CD4-positive, alpha-beta memory T cell (primary cell): ENCODE measurements at regions of chr1 and their contacts with region 1.

Region 1: DNA sequence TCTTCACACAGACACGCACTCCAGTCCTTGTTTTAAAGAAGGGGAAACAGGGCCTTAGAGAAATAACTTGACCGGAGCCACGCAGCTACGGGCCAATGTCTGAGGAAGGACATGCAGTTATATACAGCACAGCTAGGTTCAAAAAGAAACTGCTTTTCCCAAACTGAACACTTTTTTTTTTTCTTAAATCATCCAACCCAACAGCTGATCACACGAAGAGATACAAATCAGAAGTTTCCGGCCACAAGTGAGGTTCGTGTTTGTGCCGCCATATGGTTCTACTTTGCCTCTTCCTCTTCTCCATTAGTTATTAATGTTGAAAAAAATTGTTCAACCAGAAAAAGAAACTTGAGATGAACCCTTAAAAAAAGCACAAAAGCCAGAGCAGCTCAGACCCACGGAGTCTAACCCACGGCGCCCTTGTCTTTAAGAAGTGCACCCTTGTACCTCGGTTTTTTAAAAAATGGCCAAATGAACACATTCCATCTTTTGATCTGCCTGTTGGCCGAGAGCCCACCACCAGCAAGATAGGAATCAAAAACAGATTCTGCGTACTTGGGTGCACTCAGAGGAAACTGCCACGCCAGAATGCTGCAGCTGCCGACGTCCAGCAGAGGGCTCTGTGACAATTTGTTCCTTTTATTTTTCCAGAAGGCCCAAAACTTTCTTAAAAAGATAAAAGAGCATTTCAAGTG is 78.9 kb downstream of the SLC66A1 start:
- DNase-seq: peak; percentile 83 to 88 (median 86)
- H3K4me3 ChIP-seq: peak overlapping the region; percentile 34 to 46
- H3K4me3 Mint-ChIP-seq: peak overlapping the region; percentile 84 to 94 (median 87)
- H3K27ac ChIP-seq: peak overlapping the region; percentile 64
- H3K27ac Mint-ChIP-seq: peak overlapping the region; percentile 92 to 99 (median 96)
- H3K4me1 ChIP-seq: peaks cover 89% of the 10 kb centered on the region
- H3K4me1 Mint-ChIP-seq: peaks cover 56 to 95% (median 78%) of the 10 kb centered on the region in 4 donors
- H3K27me3 ChIP-seq: no peaks in the 10 kb centered on the region
- H3K27me3 Mint-ChIP-seq: no peaks in the 10 kb centered on the region

Region 2: GRCh38 chr1:18783705-18784481 is 607.2 kb before region 1 on chr1:
- CTCF ChIA-PET with region 1: no interaction called
- POLR2A ChIA-PET with region 1: no interaction called
- intact Hi-C with region 1: no loop called
- DNase-seq: no peak
- H3K4me3 ChIP-seq: no peak overlapping the region
- H3K4me3 Mint-ChIP-seq: no peak overlapping the region
- H3K27ac ChIP-seq: no peak overlapping the region
- H3K27ac Mint-ChIP-seq: no peak overlapping the region
- H3K4me1 ChIP-seq: no peaks in the 10 kb centered on the region
- H3K4me1 Mint-ChIP-seq: no peaks in the 10 kb centered on the region
- H3K27me3 ChIP-seq: no peaks in the 10 kb centered on the region
- H3K27me3 Mint-ChIP-seq: peaks cover 32% of the 10 kb centered on the region in 2 donors

Region 3: DNA sequence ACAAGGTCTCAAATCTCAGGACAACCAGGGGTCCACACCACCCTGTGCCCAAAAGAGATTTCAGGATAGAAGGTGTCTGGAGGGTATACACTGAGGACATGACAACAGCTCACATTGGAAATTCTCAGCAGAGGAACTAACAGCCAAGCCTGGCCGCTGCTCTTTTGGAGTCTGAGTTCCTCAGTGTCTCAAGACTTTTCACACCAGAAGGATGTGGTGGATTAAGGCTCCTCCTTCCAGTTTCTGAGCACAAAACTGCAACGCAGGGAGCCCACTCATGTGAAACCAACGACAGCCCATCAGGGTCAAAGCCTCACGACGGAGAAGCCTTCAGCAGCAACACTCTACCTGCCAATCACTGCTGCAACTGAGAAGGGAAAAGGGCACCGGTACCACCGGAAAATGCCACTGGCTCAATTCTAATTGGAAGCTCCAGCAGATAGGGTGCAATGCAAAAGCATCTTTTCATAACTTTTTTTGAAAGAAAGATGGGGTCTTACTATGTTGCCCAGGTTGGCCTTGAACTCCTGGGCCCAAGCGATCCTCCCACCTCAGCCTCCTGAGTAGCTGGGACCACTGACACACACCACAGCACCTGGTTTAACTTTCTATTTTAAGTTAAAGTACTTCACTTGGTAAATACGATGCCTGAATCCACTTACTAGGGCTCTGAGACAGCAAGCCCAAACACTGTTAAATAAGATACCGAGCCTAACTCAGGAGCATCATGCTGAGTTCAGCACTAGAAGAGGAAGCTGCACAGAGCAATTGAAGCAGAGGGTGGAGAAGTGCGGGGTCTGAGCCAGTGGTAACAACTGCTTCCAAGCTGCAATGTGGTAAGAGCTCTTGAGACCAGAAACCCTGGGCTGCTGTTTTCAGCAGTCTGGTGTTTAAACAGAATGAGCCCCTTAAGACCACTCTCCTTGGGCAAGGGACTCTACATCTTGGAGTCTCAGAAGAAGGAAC is 86.5 kb after region 1 on chr1:
- CTCF ChIA-PET with region 1: interaction called, 8 read pairs
- POLR2A ChIA-PET with region 1: interaction called, 20 read pairs
- intact Hi-C with region 1: no loop called
- DNase-seq: peak in 4 of 5 donors; percentile 26 to 59 (median 41)
- H3K4me3 ChIP-seq: peak overlapping the region; percentile 16 to 26
- H3K4me3 Mint-ChIP-seq: peak overlapping the region; percentile 80 to 95 (median 88)
- H3K27ac ChIP-seq: peak overlapping the region; percentile 80
- H3K27ac Mint-ChIP-seq: peak overlapping the region; percentile 92 to 99 (median 95)
- H3K4me1 ChIP-seq: peaks cover 99% of the 10 kb centered on the region
- H3K4me1 Mint-ChIP-seq: peaks cover 71 to 98% (median 87%) of the 10 kb centered on the region in 4 donors
- H3K27me3 ChIP-seq: no peaks in the 10 kb centered on the region
- H3K27me3 Mint-ChIP-seq: no peaks in the 10 kb centered on the region

Region 4: GRCh38 chr1:19793360-19794046 is 402.5 kb after region 1 on chr1:
- CTCF ChIA-PET with region 1: no interaction called
- POLR2A ChIA-PET with region 1: no interaction called
- intact Hi-C with region 1: no loop called
- DNase-seq: peak in 4 of 5 donors; percentile 8 to 24 (median 14)
- H3K4me3 ChIP-seq: no peak overlapping the region
- H3K4me3 Mint-ChIP-seq: peak overlapping the region in 3 of 8 donors; percentile 1 to 36 (median 36)
- H3K27ac ChIP-seq: no peak overlapping the region
- H3K27ac Mint-ChIP-seq: peak overlapping the region; percentile 2 to 88 (median 60)
- H3K4me1 ChIP-seq: peaks cover 35% of the 10 kb centered on the region
- H3K4me1 Mint-ChIP-seq: peaks cover 31 to 61% (median 40%) of the 10 kb centered on the region in 4 donors
- H3K27me3 ChIP-seq: no peaks in the 10 kb centered on the region
- H3K27me3 Mint-ChIP-seq: no peaks in the 10 kb centered on the region